ENCODE measurements at regions of chr12 and their contacts with region 1.

Region 1: GRCh38 chr12:34107781-34108404 is 85.6 kb downstream of the ALG10 start:
- DNase-seq: no peak
- ATAC-seq: no peak
- H3K4me3 ChIP-seq: no peak overlapping the region
- H3K27ac ChIP-seq: no peak overlapping the region
- H3K4me1 ChIP-seq: no peaks in the 10 kb centered on the region
- H3K27me3 ChIP-seq: no peaks in the 10 kb centered on the region
- CTCF ChIP-seq: no peak
- EP300 ChIP-seq: no peak
- POLR2A ChIP-seq: no peak
- RAD21 ChIP-seq: no peak

Region 2: GRCh38 chr12:34363050-34363673 is 255.3 kb after region 1 on chr12:
- CTCF ChIA-PET with region 1: no interaction called
- POLR2A ChIA-PET with region 1: no interaction called
- RAD21 ChIA-PET with region 1: no interaction called
- SMC1A ChIA-PET with region 1: no interaction called
- in situ Hi-C with region 1: loop called (anchors 25 kb)
- intact Hi-C with region 1: no loop called
- DNase-seq: no peak
- ATAC-seq: no peak
- H3K4me3 ChIP-seq: no peak overlapping the region
- H3K27ac ChIP-seq: no peak overlapping the region
- H3K4me1 ChIP-seq: no peaks in the 10 kb centered on the region
- H3K27me3 ChIP-seq: no peaks in the 10 kb centered on the region
- CTCF ChIP-seq: no peak
- EP300 ChIP-seq: no peak
- POLR2A ChIP-seq: no peak
- RAD21 ChIP-seq: no peak